Activated naive CD4-positive, alpha-beta T cell treated with anti-CD3 and anti-CD28 coated beads, Interleukin-2, amount 10 ng/mL, durations not matched to agents 7 days and 5 days (primary cell): ENCODE measurements at regions of chr1 and their contacts with region 1.

Region 1: GRCh38 chr1:145963995-145964901 is at the starts of genes ANKRD34A and POLR3GL:
- DNase-seq: peak; percentile 97
- H3K4me3 Mint-ChIP-seq: peak within 1 kb of the TSS; percentile 87
- H3K27ac Mint-ChIP-seq: peak within 1 kb of the TSS; percentile 93
- H3K4me1 Mint-ChIP-seq: peaks cover 55% of the 10 kb centered on the region
- H3K27me3 Mint-ChIP-seq: peaks cover 27% of the 10 kb centered on the region

Region 2: DNA sequence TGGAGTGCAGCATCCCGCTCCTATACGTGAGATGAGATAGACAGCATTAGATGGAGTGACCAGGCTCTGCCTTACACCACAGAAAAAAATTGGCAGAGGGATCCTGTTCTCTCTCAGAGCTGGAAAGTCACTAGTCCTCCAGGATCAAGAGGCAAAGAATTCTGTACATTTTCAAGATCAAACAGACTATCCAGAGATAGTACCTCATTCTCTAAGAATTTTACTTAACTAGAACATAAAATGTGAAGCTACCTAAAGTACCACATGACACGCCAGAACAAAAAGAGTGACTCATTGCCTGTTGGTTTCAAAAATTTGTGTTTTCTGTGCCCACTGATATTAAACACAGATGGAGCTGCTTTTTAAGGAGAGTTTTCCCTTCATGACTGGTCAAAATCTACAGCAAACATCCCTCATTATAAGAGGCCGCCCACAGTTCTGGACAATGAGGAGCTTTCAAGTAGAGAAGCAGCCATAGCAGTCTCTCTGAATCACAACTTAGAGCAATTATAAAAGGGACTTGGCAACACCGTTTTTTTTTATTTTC is 212.7 kb before region 1 on chr1:
- CTCF ChIA-PET with region 1: no interaction called
- DNase-seq: no peak
- H3K4me3 Mint-ChIP-seq: no peak overlapping the region
- H3K27ac Mint-ChIP-seq: no peak overlapping the region
- H3K4me1 Mint-ChIP-seq: no peaks in the 10 kb centered on the region
- H3K27me3 Mint-ChIP-seq: no peaks in the 10 kb centered on the region

Region 3: DNA sequence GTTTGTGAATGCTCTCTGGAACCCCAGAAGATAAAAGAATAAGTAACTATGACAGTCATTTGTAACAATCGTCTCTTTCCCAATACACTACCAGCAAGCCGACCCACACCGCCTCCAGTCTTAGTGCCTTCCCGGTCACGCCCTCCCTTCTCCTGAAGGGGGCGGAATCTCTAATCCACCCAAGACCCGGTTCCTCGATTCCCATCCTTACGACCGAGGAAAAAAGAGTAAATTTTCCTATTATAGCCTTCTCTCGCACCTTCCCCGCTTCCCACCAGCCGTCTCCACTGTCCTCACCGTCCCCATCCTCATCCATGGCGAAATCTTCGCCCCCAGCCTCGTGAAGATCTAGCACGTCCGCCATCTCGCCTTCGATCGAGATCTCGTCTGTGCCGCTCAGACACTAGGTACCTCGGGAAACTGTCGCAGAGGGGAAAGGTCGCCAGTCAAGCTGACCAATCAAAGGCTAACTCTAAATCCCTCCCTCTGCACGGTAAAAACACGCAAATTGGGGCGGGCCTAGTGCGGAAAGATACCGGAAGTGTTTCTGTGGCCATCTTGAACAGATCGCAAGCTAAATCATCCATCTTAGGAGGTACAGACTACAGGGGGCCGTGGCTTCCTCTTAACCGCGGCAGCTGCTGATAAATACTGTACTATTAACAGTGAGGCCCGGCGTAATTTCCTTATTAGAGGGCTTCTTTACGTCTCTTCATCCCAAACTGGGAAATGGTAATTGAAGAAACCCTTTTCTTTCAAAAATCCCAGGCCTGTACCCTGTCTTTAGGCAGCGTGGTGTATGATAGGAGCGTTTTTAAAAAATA is 37.0 kb before region 1 on chr1 and contains the start of gene RBM8A:
- CTCF ChIA-PET with region 1: interaction called, 12 read pairs
- DNase-seq: peak; percentile 97
- H3K4me3 Mint-ChIP-seq: no peak within 1 kb of the TSS
- H3K27ac Mint-ChIP-seq: no peak within 1 kb of the TSS
- H3K4me1 Mint-ChIP-seq: peaks cover 24% of the 10 kb centered on the region
- H3K27me3 Mint-ChIP-seq: no peaks in the 10 kb centered on the region

Region 4: DNA sequence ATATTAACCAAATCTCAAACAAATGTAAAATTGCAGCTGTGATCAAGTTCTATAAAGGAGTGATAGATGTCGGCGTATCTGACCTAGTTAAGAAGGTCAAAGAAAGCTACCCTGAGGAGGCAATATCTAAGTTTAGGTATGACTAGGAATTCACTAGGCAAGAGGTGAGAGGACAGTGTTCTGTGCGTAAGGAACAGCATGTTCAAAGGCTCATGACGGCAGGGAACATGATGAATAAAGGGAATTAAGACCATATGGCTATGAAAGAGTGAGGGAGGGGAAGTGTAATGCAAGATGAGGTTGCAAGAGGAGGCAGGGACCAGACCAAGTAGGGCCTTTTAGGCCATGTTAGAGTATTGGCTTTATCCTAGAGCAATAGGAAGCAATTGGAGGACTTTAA is 15.0 kb before region 1 on chr1:
- CTCF ChIA-PET with region 1: no interaction called
- DNase-seq: no peak
- H3K4me3 Mint-ChIP-seq: no peak overlapping the region
- H3K27ac Mint-ChIP-seq: no peak overlapping the region
- H3K4me1 Mint-ChIP-seq: peaks cover 34% of the 10 kb centered on the region
- H3K27me3 Mint-ChIP-seq: no peaks in the 10 kb centered on the region